Activated B cell treated with CpG ODN at 0.5 μM for 24 hours (primary cell): ENCODE measurements at regions of chr13 and their contacts with region 1.

Region 1: GRCh38 chr13:22061351-22061805 is 390.5 kb downstream of the FGF9 start:
- DNase-seq: peak; percentile 17
- ATAC-seq: peak; percentile 65
- H3K4me3 Mint-ChIP-seq: peak overlapping the region; percentile 51
- H3K27ac Mint-ChIP-seq: peak overlapping the region; percentile 86
- H3K4me1 Mint-ChIP-seq: peaks cover 46% of the 10 kb centered on the region
- H3K27me3 Mint-ChIP-seq: no peaks in the 10 kb centered on the region
- CTCF ChIP-seq: no peak

Region 2: DNA sequence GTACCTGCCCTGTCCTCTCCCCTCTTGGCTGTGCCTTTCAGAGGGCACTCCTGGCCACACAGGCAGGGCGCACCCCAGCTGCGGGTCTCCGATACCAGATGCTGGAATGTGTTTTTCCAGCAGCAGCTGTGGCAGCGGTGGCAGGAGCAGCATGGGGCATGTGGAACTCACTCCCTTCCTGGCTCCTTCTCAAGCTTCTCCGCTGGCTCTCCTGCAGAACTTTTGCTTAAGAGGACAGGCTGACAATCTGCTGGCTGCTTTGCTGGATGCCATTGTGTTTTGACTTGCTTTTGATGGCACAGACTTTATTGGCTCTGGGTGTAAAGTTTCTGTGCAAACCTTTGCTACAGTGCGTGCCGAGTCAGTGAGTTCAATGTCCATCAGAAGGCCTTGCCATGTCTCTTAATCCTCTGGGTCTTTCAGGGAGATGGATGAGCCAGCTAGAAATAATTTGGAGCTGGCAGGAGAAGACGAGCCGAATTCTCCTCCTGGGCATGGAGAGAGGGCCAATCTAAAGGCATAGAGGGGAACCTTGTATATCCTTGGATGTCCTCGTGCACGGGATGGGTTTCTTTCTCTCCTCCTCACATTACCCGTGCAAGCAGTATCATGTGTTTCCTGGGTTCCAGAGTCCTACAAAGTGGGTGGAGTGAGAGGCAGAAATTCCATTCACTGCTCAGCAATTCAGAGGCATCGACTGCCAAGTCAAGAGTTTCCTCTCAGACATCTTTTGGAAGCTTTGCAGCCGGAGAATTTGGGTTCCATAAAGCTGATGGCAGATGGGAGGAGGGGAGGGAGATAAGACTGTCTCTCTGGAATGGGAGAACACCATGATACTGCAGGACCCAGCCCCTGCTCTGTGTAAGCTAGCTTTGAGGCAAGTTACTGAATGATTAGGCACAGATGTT is 159.3 kb before region 1 on chr13:
- CTCF ChIA-PET with region 1: no interaction called
- POLR2A ChIA-PET with region 1: no interaction called
- intact Hi-C with region 1: no loop called
- DNase-seq: no peak
- ATAC-seq: no peak
- H3K4me3 Mint-ChIP-seq: no peak overlapping the region
- H3K27ac Mint-ChIP-seq: no peak overlapping the region
- H3K4me1 Mint-ChIP-seq: no peaks in the 10 kb centered on the region
- H3K27me3 Mint-ChIP-seq: no peaks in the 10 kb centered on the region
- CTCF ChIP-seq: no peak

Region 3: DNA sequence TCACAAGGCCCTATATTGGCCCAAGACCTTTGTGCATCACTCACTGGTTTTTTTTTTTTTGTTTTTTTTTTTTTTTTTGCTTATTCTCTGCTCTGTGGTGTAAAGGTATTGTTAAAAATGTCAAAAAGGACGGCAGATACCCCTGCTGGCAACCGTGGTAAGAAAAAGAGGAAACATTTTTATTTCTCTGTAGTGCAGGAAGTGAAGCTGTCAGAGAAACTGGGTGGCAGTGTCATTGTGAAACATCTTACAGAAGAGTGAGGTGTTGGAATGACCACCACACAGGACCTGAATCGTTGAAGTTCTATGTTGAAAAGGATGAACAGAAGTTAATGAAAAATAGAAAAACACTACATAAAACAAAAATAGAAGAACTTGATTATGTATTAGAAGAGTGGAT is 44.2 kb before region 1 on chr13:
- CTCF ChIA-PET with region 1: no interaction called
- POLR2A ChIA-PET with region 1: no interaction called
- intact Hi-C with region 1: no loop called
- DNase-seq: no peak
- ATAC-seq: peak; percentile 50
- H3K4me3 Mint-ChIP-seq: no peak overlapping the region
- H3K27ac Mint-ChIP-seq: no peak overlapping the region
- H3K4me1 Mint-ChIP-seq: peaks cover 6% of the 10 kb centered on the region
- H3K27me3 Mint-ChIP-seq: no peaks in the 10 kb centered on the region
- CTCF ChIP-seq: no peak

Region 4: DNA sequence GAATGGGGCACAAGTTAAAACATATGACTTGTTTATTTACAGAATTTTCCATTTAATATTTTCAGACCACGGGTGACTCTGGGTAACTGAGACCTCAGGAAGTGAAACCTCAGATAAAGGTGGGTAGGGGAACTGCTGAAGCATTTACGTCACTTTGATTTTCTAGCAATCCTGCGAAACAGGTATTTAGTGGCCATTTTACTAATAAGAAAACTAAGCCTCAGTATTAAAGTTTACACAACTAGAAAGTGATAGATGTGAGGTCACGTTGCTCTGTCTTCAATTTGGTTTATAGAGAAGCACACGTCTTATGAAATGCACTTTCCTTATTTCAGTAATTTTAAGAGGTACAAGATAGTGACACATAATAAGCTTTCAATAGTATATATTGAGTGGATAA is 12.3 kb after region 1 on chr13:
- CTCF ChIA-PET with region 1: no interaction called
- POLR2A ChIA-PET with region 1: interaction called, 5 read pairs
- intact Hi-C with region 1: loop called (anchors 1 kb)
- DNase-seq: no peak
- ATAC-seq: peak; percentile 61
- H3K4me3 Mint-ChIP-seq: peak overlapping the region; percentile 32
- H3K27ac Mint-ChIP-seq: no peak overlapping the region
- H3K4me1 Mint-ChIP-seq: peaks cover 22% of the 10 kb centered on the region
- H3K27me3 Mint-ChIP-seq: no peaks in the 10 kb centered on the region
- CTCF ChIP-seq: no peak

Region 5: DNA sequence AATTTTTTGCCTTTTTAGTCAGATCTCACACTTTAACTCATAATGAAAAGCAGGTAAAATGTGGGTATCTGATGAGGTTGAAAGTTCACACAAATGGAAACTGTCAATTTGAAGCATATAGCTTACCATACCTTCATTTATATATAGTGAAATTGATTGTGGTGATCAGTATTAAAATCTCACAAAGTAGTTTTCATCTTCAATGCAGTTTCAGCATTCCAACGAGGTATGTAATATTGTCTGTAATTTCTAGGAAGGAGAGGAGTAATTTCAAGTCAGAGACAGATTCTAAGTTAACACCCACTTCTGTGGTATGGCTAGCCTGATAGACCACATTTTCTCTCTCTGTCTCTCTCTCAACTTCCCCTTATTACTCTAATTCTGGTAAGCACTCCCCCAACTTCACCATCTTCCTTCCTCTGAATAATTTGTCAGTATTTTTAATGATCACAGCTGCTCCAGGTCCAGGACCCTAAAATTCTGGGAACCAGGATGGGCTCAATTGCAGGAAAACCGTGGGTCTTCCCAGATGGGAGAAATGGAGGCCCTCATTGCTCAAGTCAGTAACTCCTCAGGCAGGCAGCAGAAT is 65.1 kb after region 1 on chr13:
- CTCF ChIA-PET with region 1: no interaction called
- POLR2A ChIA-PET with region 1: no interaction called
- intact Hi-C with region 1: loop called (anchors 5 kb)
- DNase-seq: no peak
- ATAC-seq: peak; percentile 97
- H3K4me3 Mint-ChIP-seq: peak overlapping the region; percentile 26
- H3K27ac Mint-ChIP-seq: peak overlapping the region; percentile 68
- H3K4me1 Mint-ChIP-seq: peaks cover 30% of the 10 kb centered on the region
- H3K27me3 Mint-ChIP-seq: no peaks in the 10 kb centered on the region
- CTCF ChIP-seq: no peak

Region 6: GRCh38 chr13:22161871-22162270 is 100.5 kb after region 1 on chr13:
- CTCF ChIA-PET with region 1: no interaction called
- POLR2A ChIA-PET with region 1: no interaction called
- intact Hi-C with region 1: loop called (anchors 5 kb)
- DNase-seq: no peak
- ATAC-seq: peak; percentile 73
- H3K4me3 Mint-ChIP-seq: peak overlapping the region; percentile 52
- H3K27ac Mint-ChIP-seq: peak overlapping the region; percentile 53
- H3K4me1 Mint-ChIP-seq: peaks cover 26% of the 10 kb centered on the region
- H3K27me3 Mint-ChIP-seq: no peaks in the 10 kb centered on the region
- CTCF ChIP-seq: no peak